ENCODE measurements at regions of chr20 and their contacts with region 1.

Region 1: DNA sequence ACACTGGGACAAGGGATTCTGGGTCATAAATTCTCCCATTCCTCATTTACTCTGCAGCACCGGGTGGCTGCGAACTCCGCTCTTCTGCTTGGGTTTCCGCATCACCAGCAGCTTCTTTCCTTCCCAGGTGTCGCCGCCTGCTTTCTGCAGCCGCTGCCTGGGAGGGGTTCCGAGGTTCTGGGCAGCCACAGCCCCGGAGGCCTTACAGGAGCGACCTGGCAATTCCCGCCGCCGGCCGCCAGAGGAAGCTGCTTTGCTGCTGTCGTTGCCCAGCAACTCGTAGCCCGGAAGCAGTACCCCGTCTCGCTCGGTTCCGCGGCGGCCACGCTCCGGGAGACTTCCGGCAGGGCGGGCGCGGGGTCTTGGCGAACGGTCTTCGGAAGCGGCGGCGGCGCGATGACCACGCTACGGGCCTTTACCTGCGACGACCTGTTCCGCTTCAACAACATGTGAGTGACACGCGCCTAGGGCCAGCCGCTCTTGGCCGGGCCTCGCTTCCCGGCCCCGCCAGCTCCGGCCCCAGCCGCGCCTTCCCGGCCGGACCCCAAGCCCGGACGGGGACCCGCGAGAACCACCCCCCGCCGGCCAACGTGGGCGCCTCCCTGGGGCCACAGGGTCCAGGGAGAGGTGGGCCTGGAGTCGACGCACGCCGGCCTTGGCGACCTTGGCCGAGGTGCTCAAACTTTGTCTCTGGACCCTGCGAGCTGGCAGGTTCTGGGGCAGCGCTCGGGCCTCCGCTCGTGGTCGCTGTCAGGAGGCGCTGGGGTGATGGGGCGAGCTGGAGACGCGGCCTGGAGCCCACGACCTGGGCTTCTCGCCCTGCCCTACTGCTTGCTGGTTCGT is at the start of gene NAA20:
- DNase-seq: peak; percentile 91
- H3K4me3 Mint-ChIP-seq: peak within 1 kb of the TSS; percentile 73
- H3K27ac Mint-ChIP-seq: peak within 1 kb of the TSS; percentile 95
- H3K4me1 Mint-ChIP-seq: peaks cover 41% of the 10 kb centered on the region
- H3K27me3 Mint-ChIP-seq: no peaks in the 10 kb centered on the region
- CTCF ChIP-seq: peak; percentile 71
- total RNA-seq, gene NAA20: 109 and 126 TPM in 2 replicates

Region 2: GRCh38 chr20:19628570-19629169 is 388.6 kb before region 1 on chr20:
- CTCF ChIA-PET with region 1: no interaction called
- POLR2A ChIA-PET with region 1: no interaction called
- intact Hi-C with region 1: no loop called
- DNase-seq: peak; percentile 87
- H3K4me3 Mint-ChIP-seq: no peak overlapping the region
- H3K27ac Mint-ChIP-seq: peak overlapping the region; percentile 49
- H3K4me1 Mint-ChIP-seq: no peaks in the 10 kb centered on the region
- H3K27me3 Mint-ChIP-seq: no peaks in the 10 kb centered on the region
- CTCF ChIP-seq: peak; percentile 84

Region 3: GRCh38 chr20:19742974-19743639 is 274.1 kb before region 1 on chr20:
- CTCF ChIA-PET with region 1: no interaction called
- POLR2A ChIA-PET with region 1: no interaction called
- intact Hi-C with region 1: no loop called
- DNase-seq: no peak
- H3K4me3 Mint-ChIP-seq: no peak overlapping the region
- H3K27ac Mint-ChIP-seq: no peak overlapping the region
- H3K4me1 Mint-ChIP-seq: peaks cover 5% of the 10 kb centered on the region
- H3K27me3 Mint-ChIP-seq: no peaks in the 10 kb centered on the region
- CTCF ChIP-seq: no peak

Region 4: DNA sequence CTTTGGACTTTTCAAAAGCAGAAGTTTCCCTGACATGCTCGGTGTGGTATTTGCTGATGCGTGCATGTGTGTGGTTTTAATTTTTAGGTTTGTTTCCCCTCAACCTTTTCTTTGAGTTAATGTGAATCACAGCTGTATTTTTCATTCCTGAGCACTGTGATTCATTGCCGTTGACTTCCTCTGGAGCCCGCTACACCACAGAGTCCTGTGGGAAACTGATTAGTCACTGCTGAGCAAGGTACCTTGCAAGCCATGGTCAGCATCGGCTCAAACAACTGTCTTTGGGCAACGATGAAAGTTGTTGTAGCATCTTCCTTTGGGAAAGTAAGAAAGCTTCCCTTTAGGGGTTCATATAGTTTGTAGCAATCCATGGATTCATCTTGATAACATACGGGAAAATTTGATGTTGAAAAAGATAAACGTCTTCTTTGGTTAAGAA is 201.7 kb before region 1 on chr20:
- CTCF ChIA-PET with region 1: interaction called, 3 read pairs
- POLR2A ChIA-PET with region 1: interaction called, 11 read pairs
- intact Hi-C with region 1: no loop called
- DNase-seq: peak; percentile 95
- H3K4me3 Mint-ChIP-seq: peak overlapping the region; percentile 44
- H3K27ac Mint-ChIP-seq: peak overlapping the region; percentile 90
- H3K4me1 Mint-ChIP-seq: peaks cover 20% of the 10 kb centered on the region
- H3K27me3 Mint-ChIP-seq: no peaks in the 10 kb centered on the region
- CTCF ChIP-seq: no peak

Region 5: DNA sequence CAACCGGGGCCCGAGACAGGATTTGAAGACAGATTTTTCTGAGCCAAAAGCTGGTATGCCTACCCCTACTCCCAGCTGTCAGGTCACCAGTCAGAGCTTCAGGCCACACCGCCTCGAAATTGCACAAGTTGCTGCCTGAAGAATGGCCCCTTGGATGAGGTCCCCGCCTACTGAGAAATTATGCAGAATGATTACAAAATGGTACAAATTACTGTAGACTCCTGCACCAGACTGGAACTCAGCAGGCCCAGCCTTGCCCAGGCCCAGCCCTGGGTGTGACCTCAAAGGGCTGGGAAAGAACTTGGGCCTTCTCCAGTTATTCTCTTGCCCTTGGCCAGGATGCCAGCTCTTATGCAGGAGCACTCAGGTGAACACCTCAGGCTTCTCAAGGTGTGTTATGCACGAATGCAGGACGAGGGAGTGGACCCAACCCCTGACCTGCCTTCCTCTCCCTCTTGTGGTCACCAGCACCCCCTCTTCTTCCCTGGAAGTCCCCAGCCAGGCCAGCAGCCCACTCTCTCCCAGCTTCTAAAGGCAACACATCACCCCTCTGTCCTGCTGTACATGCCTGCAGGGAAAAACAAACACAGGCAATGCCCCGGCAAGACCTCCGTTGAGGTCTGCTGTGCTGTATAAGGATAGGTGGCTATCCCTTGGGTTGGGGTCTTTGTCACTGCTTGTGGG is 88.8 kb before region 1 on chr20:
- CTCF ChIA-PET with region 1: interaction called, 3 read pairs
- POLR2A ChIA-PET with region 1: interaction called, 11 read pairs
- intact Hi-C with region 1: no loop called
- DNase-seq: peak; percentile 97
- H3K4me3 Mint-ChIP-seq: peak overlapping the region; percentile 14
- H3K27ac Mint-ChIP-seq: peak overlapping the region; percentile 90
- H3K4me1 Mint-ChIP-seq: peaks cover 19% of the 10 kb centered on the region
- H3K27me3 Mint-ChIP-seq: no peaks in the 10 kb centered on the region
- CTCF ChIP-seq: no peak

Region 6: GRCh38 chr20:19947611-19948264 is 69.5 kb before region 1 on chr20:
- CTCF ChIA-PET with region 1: no interaction called
- POLR2A ChIA-PET with region 1: no interaction called
- intact Hi-C with region 1: no loop called
- DNase-seq: peak; percentile 49
- H3K4me3 Mint-ChIP-seq: no peak overlapping the region
- H3K27ac Mint-ChIP-seq: no peak overlapping the region
- H3K4me1 Mint-ChIP-seq: no peaks in the 10 kb centered on the region
- H3K27me3 Mint-ChIP-seq: no peaks in the 10 kb centered on the region
- CTCF ChIP-seq: no peak

Region 7: GRCh38 chr20:20003031-20003954 is 13.9 kb before region 1 on chr20:
- CTCF ChIA-PET with region 1: interaction called, 7 read pairs
- POLR2A ChIA-PET with region 1: interaction called, 16 read pairs
- intact Hi-C with region 1: no loop called
- DNase-seq: no peak
- H3K4me3 Mint-ChIP-seq: no peak overlapping the region
- H3K27ac Mint-ChIP-seq: no peak overlapping the region
- H3K4me1 Mint-ChIP-seq: peaks cover 6% of the 10 kb centered on the region
- H3K27me3 Mint-ChIP-seq: no peaks in the 10 kb centered on the region
- CTCF ChIP-seq: no peak

Region 8: DNA sequence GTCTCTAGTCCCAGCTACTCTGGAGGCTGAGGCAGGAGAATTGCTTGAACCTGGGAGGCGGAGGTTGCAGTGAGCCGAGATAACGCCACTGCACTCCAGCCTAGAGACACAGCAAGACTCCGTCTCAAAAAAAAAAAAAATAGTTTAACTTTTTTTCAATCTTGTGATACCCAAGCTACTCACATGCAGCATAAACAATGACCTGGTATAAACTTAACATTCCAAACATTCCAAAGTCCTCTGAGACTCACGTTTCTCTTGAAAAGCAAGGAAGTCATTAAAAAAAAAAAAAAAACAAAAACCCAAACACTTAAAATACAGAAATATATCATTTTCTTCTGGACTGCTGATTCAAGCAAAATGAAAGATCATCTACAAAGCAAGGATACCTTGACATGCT is 20.7 kb after region 1 on chr20:
- CTCF ChIA-PET with region 1: interaction called, 7 read pairs
- POLR2A ChIA-PET with region 1: interaction called, 43 read pairs
- intact Hi-C with region 1: no loop called
- DNase-seq: no peak
- H3K4me3 Mint-ChIP-seq: no peak overlapping the region
- H3K27ac Mint-ChIP-seq: no peak overlapping the region
- H3K4me1 Mint-ChIP-seq: peaks cover 5% of the 10 kb centered on the region
- H3K27me3 Mint-ChIP-seq: no peaks in the 10 kb centered on the region
- CTCF ChIP-seq: no peak

Region 9: GRCh38 chr20:20237093-20237959 is 220.1 kb after region 1 on chr20:
- CTCF ChIA-PET with region 1: no interaction called
- POLR2A ChIA-PET with region 1: no interaction called
- intact Hi-C with region 1: loop called (anchors 5 kb)
- DNase-seq: peak; percentile 65
- H3K4me3 Mint-ChIP-seq: no peak overlapping the region
- H3K27ac Mint-ChIP-seq: peak overlapping the region; percentile 4
- H3K4me1 Mint-ChIP-seq: peaks cover 7% of the 10 kb centered on the region
- H3K27me3 Mint-ChIP-seq: no peaks in the 10 kb centered on the region
- CTCF ChIP-seq: peak; percentile 59

Measured in MCF 10A (cell line).